ENCODE measurements at regions of chr12 and their contacts with region 1.

Region 1: DNA sequence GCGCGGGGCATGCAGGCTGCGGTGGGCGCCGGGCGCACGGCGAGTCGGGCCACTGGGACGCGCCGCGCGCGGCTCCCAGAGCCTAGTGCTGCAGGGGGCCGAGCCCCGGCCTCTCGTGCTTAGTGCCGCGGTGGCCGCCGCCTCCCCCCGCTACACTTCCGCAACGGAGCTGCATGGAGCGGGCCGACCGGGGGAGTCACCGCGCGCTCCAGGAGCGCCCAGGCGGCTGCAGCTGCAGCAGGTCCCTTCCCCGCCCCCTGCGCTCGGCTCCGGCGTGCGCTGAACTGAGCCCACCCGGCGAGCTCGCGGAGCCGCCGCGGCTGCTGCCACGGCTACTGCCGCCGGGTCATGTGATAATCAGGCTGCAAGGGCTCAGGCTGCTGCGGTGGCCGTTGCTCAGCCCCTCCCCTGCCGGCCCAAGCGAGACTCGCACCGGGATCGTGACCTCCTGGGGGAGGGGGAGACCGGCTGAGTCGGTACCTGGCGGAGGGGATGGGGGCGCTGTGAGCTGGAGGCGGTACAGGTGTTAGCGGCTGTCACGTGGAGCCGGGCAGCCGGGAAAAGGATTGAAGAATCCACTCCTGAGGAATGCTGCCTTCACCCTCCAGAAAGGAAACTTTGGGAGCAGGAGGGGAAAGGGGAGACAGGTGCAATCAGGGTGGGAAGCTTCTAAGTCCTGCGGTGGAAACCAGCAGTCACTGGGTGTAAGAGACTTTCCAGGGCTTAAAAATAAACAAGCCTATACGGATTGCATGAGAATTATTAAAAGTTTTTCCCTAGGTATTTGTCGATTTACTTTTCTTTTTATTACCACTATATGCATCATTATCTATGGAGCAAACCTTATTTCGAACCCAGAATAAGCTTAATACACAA is at the start of gene PPM1H:
- DNase-seq: peak; percentile 80 to 89
- H3K4me3 ChIP-seq: peak within 1 kb of the TSS; percentile 91
- H3K27ac ChIP-seq: peak within 1 kb of the TSS; percentile 38
- H3K4me1 ChIP-seq: peaks cover 38% of the 10 kb centered on the region
- H3K27me3 ChIP-seq: no peaks in the 10 kb centered on the region
- CTCF ChIP-seq: peak; percentile 77
- total RNA-seq, gene PPM1H: 11.4 and 13.5 TPM in 2 replicates

Region 2: GRCh38 chr12:62711631-62712241 is 223.3 kb before region 1 on chr12:
- CTCF ChIA-PET with region 1: no interaction called
- POLR2A ChIA-PET with region 1: no interaction called
- intact Hi-C with region 1: no loop called
- DNase-seq: no peak
- H3K4me3 ChIP-seq: no peak overlapping the region
- H3K27ac ChIP-seq: no peak overlapping the region
- H3K4me1 ChIP-seq: peaks cover 7% of the 10 kb centered on the region
- H3K27me3 ChIP-seq: no peaks in the 10 kb centered on the region
- CTCF ChIP-seq: no peak

Region 3: DNA sequence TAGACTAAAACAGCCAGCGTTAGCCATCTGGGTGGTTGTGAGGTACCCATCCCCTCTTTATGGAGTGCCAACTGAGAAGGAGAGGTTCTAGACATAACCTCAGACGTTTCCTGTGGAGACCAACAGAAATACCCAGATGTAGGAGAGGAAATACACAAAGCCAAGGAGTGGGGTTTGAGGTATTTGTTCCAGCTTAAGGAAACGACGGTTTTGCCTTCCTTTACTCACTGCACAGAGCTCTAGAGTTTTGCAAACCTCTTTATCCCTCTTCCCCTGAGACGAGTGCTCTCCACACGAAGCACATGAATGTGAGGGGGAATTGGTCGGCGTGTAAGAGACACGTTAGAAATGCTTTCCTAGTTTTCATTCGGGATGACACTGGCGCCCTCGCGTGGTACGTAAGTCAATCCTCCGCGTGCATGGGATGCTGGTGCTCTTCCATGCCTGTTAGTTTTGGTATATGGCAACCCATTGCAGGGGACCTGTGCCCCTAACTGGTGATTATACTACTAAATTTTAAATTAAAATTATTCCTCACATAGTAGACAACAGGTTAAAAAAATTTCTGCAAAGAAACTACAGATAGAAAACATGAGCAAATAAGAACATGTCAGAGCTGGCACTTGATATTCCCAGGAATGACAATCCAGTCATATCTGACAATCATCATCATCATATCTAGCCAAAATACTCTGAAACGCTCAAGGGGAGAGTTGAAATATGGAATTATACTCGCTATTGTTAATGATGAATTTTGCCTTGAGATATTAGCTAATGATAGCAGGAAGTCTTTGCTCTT is 121.8 kb before region 1 on chr12:
- CTCF ChIA-PET with region 1: interaction called, 4 read pairs
- POLR2A ChIA-PET with region 1: no interaction called
- intact Hi-C with region 1: loop called (anchors 2 kb)
- DNase-seq: peak in 1 of 2 experiments; percentile 27
- H3K4me3 ChIP-seq: no peak overlapping the region
- H3K27ac ChIP-seq: no peak overlapping the region
- H3K4me1 ChIP-seq: no peaks in the 10 kb centered on the region
- H3K27me3 ChIP-seq: no peaks in the 10 kb centered on the region
- CTCF ChIP-seq: peak; percentile 64

Region 4: GRCh38 chr12:62866451-62867082 is 68.5 kb before region 1 on chr12:
- CTCF ChIA-PET with region 1: no interaction called
- POLR2A ChIA-PET with region 1: no interaction called
- intact Hi-C with region 1: loop called (anchors 2 kb)
- DNase-seq: peak; percentile 53 to 87
- H3K4me3 ChIP-seq: peak overlapping the region; percentile 19; the same call in 1 of the 2 replicates
- H3K27ac ChIP-seq: peak overlapping the region; percentile 85
- H3K4me1 ChIP-seq: peaks cover 53% of the 10 kb centered on the region
- H3K27me3 ChIP-seq: no peaks in the 10 kb centered on the region
- CTCF ChIP-seq: no peak